CD4-positive, alpha-beta memory T cell (primary cell): ENCODE measurements at regions of chr4 and their contacts with region 1.

Region 1: GRCh38 chr4:22389240-22389870 is 126.5 kb downstream of the ADGRA3 start:
- DNase-seq: peak in 2 of 5 donors; percentile 5 to 18
- H3K4me3 ChIP-seq: no peak overlapping the region
- H3K4me3 Mint-ChIP-seq: no peak overlapping the region
- H3K27ac ChIP-seq: no peak overlapping the region
- H3K27ac Mint-ChIP-seq: no peak overlapping the region
- H3K4me1 ChIP-seq: no peaks in the 10 kb centered on the region
- H3K4me1 Mint-ChIP-seq: no peaks in the 10 kb centered on the region
- H3K27me3 ChIP-seq: no peaks in the 10 kb centered on the region
- H3K27me3 Mint-ChIP-seq: no peaks in the 10 kb centered on the region

Region 2: DNA sequence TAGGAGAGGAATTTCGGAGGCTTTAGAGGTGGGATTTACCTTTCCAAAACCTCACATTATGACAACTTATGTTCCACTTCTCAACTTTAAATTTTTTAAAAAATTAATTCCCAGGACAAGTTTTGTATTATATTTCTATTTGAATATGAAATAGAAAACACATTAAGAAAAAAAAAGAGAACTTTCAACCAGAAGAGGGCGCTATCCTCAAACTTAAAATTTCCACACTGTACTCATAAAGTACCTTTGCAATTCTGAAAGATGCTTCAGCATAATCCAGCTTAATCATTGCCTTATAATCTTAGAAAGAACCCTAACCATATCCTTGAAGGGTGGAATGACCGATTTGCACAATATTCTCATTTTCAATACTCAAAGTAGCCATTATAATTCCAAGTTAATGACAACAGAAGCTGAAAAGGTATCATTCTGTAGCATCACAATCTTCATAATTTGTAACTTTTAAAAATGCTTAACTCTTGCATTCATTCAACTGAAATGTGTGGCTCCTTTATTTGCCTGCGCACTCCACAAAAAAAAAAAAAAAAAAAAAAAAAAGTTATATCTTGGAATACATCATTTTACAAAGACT is 598.8 kb before region 1 on chr4:
- CTCF ChIA-PET with region 1: interaction called, 29 read pairs
- POLR2A ChIA-PET with region 1: no interaction called
- intact Hi-C with region 1: no loop called
- DNase-seq: no peak
- H3K4me3 ChIP-seq: no peak overlapping the region
- H3K4me3 Mint-ChIP-seq: no peak overlapping the region
- H3K27ac ChIP-seq: no peak overlapping the region
- H3K27ac Mint-ChIP-seq: no peak overlapping the region
- H3K4me1 ChIP-seq: no peaks in the 10 kb centered on the region
- H3K4me1 Mint-ChIP-seq: no peaks in the 10 kb centered on the region
- H3K27me3 ChIP-seq: no peaks in the 10 kb centered on the region
- H3K27me3 Mint-ChIP-seq: no peaks in the 10 kb centered on the region

Region 3: DNA sequence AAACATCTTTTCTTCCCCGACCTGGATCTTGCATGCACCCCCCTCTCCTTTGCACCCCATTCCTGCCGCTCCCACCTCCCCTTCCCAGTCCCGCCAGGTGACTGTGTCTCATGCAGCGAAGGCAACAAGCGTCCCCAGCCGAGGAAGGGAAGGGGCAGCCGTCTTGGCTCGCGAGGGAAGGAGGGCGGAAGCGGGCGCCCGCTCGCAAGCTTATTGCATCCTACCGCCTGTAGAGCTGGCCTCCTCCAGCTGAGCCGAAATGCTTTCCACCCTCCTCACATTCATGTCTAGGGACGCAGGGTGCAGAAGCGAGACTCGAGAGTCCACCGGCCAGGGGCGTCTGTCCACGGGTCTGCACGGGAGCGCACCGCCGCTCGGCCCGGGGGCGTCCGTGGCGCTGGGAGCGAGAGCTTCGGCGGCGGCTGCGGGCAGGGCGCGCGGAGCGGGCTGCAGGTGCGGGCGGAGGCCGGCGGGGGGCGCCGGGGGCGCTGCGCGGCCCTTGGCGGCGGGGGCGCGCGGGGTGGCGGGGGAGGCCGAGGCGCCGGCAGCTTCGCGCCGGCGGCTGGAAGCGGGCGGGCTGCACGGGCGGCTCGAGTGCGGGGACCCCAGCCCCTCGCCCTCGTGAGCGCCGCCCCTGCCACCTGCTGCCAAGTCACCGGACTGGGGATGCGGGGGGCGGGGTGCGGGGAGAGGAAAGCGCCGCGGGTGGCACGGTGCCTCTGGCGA is 440.8 kb before region 1 on chr4 and contains the start of gene KCNIP4:
- CTCF ChIA-PET with region 1: no interaction called
- POLR2A ChIA-PET with region 1: no interaction called
- intact Hi-C with region 1: no loop called
- DNase-seq: peak in 1 of 5 donors; percentile 33
- H3K4me3 ChIP-seq: no peak within 1 kb of the TSS
- H3K4me3 Mint-ChIP-seq: no peak within 1 kb of the TSS
- H3K27ac ChIP-seq: no peak within 1 kb of the TSS
- H3K27ac Mint-ChIP-seq: no peak within 1 kb of the TSS
- H3K4me1 ChIP-seq: no peaks in the 10 kb centered on the region
- H3K4me1 Mint-ChIP-seq: peaks cover 0 to 3% (median 0%) of the 10 kb centered on the region in 4 donors
- H3K27me3 ChIP-seq: no peaks in the 10 kb centered on the region
- H3K27me3 Mint-ChIP-seq: peaks cover 5 to 13% of the 10 kb centered on the region in 2 donors
- total RNA-seq, gene KCNIP4: not detected

Region 4: DNA sequence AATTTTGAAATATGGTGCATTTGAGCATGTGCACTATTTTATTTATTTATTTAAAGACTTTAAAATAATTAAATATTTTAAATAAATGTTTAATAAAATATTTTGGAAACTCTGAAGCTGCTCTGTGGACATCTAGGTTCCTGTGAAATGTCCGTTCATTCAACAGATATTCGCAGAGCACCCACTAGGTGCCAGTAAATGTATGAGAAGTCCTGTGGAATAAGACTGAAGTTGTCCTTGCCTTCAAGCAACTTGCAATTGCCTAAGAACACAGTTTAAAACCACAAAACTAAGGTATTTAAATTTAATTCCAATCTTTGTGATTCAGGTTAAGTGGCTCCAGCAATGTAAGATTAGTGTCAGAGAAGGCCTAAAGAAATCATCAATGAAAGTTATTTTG is 610.1 kb after region 1 on chr4:
- CTCF ChIA-PET with region 1: no interaction called
- POLR2A ChIA-PET with region 1: no interaction called
- intact Hi-C with region 1: no loop called
- DNase-seq: no peak
- H3K4me3 ChIP-seq: no peak overlapping the region
- H3K4me3 Mint-ChIP-seq: no peak overlapping the region
- H3K27ac ChIP-seq: no peak overlapping the region
- H3K27ac Mint-ChIP-seq: no peak overlapping the region
- H3K4me1 ChIP-seq: no peaks in the 10 kb centered on the region
- H3K4me1 Mint-ChIP-seq: no peaks in the 10 kb centered on the region
- H3K27me3 ChIP-seq: no peaks in the 10 kb centered on the region
- H3K27me3 Mint-ChIP-seq: no peaks in the 10 kb centered on the region